Calu3 (cell line): ENCODE measurements at regions of chr21 and their contacts with region 1.

Region 1: GRCh38 chr21:42117229-42117966 is 46.3 kb downstream of the UMODL1 start:
- DNase-seq: peak; percentile 73
- H3K4me3 Mint-ChIP-seq: no peak overlapping the region
- H3K27ac Mint-ChIP-seq: no peak overlapping the region
- H3K4me1 Mint-ChIP-seq: peaks cover 7% of the 10 kb centered on the region
- H3K27me3 Mint-ChIP-seq: peaks cover 60% of the 10 kb centered on the region
- CTCF ChIP-seq: peak; percentile 79

Region 2: GRCh38 chr21:41879190-41879998 is 238.0 kb before region 1 on chr21 and contains the start of gene PRDM15:
- CTCF ChIA-PET with region 1: interaction called, 5 read pairs
- intact Hi-C with region 1: loop called (anchors 10 kb)
- DNase-seq: peak; percentile 81
- H3K4me3 Mint-ChIP-seq: peak within 1 kb of the TSS; percentile 72
- H3K27ac Mint-ChIP-seq: no peak within 1 kb of the TSS
- H3K4me1 Mint-ChIP-seq: no peaks in the 10 kb centered on the region
- H3K27me3 Mint-ChIP-seq: no peaks in the 10 kb centered on the region
- CTCF ChIP-seq: no peak
- total RNA-seq, gene PRDM15: 10.1 and 10.4 TPM in 2 replicates

Region 3: DNA sequence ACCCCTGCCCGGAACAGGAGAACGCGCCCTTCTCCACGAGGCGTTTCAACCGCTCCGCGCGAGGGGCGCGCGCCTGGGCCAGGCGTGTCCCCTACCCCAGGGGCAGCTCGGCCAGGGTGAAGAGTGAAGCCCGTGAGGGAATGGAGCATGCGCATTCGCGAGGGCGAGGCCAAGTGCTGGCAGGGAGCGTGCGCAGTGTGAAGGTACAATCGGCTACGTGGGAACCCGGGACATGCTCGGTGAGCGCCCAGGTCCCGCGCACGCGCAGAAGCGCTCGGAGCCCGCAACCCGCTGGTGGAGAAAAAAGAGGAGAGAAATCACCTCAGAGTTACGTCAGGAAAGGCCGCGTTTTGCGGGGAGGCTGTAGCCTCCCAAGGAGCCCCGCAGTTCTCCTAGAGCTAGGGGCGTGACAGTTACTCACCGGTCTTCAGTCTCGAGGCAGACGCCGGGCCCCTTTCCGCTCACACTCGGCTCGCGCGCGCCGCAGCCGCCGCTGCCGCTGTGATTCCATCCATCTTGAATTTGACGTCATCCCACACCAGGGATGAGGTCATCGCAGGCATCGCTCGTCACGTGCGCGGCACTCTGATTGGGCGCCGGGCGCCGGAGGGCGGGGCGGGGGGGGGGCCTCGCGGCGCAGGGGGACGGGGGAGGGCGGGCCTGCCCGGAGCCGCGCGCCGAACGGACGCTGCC is 107.4 kb before region 1 on chr21 and contains the start of gene ZBTB21:
- CTCF ChIA-PET with region 1: no interaction called
- intact Hi-C with region 1: loop called (anchors 5 kb)
- DNase-seq: peak; percentile 94
- H3K4me3 Mint-ChIP-seq: peak within 1 kb of the TSS; percentile 94
- H3K27ac Mint-ChIP-seq: peak within 1 kb of the TSS; percentile 98
- H3K4me1 Mint-ChIP-seq: peaks cover 8% of the 10 kb centered on the region
- H3K27me3 Mint-ChIP-seq: peaks cover 22% of the 10 kb centered on the region
- CTCF ChIP-seq: peak; percentile 6
- total RNA-seq, gene ZBTB21: 14.5 and 17.3 TPM in 2 replicates

Region 4: DNA sequence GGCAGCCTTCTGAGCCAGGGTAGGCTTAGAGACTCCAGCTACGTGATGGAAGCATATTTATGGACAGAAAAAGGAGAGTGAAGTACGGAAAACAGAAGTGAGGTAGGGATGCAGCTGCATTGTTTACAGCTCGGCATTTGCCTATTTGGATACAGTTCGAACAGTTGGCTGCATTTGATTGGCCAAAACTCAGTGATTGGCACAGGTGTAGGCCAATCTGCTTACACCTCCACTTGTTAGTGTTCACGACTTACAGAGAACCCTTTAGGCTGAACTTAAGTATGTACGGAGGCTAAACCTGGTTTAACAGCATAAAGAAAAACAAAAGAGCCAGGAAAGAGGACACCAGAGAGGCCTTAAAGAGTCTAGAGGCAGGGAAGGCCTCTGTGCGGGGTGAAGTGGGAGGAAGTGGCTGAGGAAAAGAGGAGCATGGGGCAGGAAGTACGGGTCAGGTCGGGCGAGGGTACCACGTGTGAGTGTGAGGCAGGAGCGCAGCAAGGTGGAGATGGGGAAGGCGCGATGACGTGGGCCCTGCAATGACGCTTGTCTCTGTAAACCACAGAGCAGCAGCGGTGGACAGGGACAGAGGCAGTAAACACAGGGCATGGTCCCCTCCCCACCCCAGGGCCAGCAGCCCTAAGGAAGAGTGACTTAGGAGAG is 346.6 kb after region 1 on chr21:
- CTCF ChIA-PET with region 1: no interaction called
- intact Hi-C with region 1: no loop called
- DNase-seq: peak; percentile 54
- H3K4me3 Mint-ChIP-seq: peak overlapping the region; percentile 35
- H3K27ac Mint-ChIP-seq: peak overlapping the region; percentile 95
- H3K4me1 Mint-ChIP-seq: peaks cover 71% of the 10 kb centered on the region
- H3K27me3 Mint-ChIP-seq: no peaks in the 10 kb centered on the region
- CTCF ChIP-seq: no peak